MCF 10A (cell line): ENCODE measurements at regions of chr3 and their contacts with region 1.

Region 1: DNA sequence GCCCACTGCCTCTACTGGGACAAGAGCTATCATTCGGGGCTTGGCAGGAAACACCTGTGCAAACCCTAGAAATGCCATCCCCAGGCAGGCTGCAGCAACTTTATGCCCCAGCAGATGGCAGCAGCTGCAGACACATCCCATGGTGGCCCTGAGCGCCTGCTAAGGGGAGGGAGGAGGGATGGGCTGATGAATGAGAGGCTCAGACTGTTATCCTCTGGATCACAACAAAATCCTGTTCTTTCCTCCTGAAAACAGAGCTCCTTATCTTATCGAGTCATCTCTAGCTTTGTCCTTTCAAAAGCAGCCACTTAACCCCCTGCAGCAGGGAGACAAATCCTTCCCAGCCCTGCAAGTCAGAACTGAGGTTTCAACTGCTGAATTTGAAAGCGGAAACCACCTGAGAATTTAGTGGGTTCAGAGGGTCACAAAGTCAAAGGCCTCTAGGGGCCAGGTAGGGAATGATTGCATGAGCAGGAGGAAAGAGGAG is 90.6 kb upstream of the PROK2 start:
- DNase-seq: peak; percentile 79
- H3K4me3 Mint-ChIP-seq: no peak overlapping the region
- H3K27ac Mint-ChIP-seq: no peak overlapping the region
- H3K4me1 Mint-ChIP-seq: no peaks in the 10 kb centered on the region
- H3K27me3 Mint-ChIP-seq: peaks cover 4% of the 10 kb centered on the region
- CTCF ChIP-seq: peak; percentile 87

Region 2: GRCh38 chr3:71725279-71725991 is 150.1 kb before region 1 on chr3 and contains the start of gene EIF4E3:
- CTCF ChIA-PET with region 1: interaction called, 19 read pairs
- POLR2A ChIA-PET with region 1: no interaction called
- intact Hi-C with region 1: no loop called
- DNase-seq: peak; percentile 17
- H3K4me3 Mint-ChIP-seq: peak within 1 kb of the TSS; percentile 77
- H3K27ac Mint-ChIP-seq: peak within 1 kb of the TSS; percentile 5
- H3K4me1 Mint-ChIP-seq: no peaks in the 10 kb centered on the region
- H3K27me3 Mint-ChIP-seq: no peaks in the 10 kb centered on the region
- CTCF ChIP-seq: no peak
- total RNA-seq, gene EIF4E3: 4.3 and 7.6 TPM in 2 replicates

Region 3: DNA sequence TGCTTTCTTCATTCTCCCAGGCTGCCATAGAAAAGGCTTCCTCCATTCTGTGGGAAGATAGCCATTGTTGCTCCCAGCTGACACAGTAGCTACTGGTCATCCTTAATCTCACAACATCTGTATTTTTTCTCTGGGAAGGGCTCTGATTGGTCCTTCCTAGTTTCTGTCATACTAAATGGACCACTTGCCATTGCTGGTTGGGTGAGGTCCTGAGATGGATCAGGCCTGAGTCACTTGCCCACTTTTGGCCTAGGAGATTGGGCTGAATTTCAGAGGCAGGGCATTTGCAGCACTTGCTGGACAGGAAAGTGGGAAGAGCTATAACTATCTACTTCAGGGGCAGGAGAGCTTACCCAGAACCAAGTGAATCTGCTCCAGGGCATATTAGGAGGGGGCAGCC is 16.0 kb after region 1 on chr3:
- CTCF ChIA-PET with region 1: interaction called, 59 read pairs
- POLR2A ChIA-PET with region 1: interaction called, 6 read pairs
- intact Hi-C with region 1: no loop called
- DNase-seq: no peak
- H3K4me3 Mint-ChIP-seq: no peak overlapping the region
- H3K27ac Mint-ChIP-seq: no peak overlapping the region
- H3K4me1 Mint-ChIP-seq: peaks cover 7% of the 10 kb centered on the region
- H3K27me3 Mint-ChIP-seq: peaks cover 26% of the 10 kb centered on the region
- CTCF ChIP-seq: no peak

Region 4: GRCh38 chr3:71926262-71926600 is 50.7 kb after region 1 on chr3:
- CTCF ChIA-PET with region 1: interaction called, 18 read pairs
- POLR2A ChIA-PET with region 1: no interaction called
- intact Hi-C with region 1: no loop called
- DNase-seq: peak; percentile 68
- H3K4me3 Mint-ChIP-seq: no peak overlapping the region
- H3K27ac Mint-ChIP-seq: no peak overlapping the region
- H3K4me1 Mint-ChIP-seq: peaks cover 13% of the 10 kb centered on the region
- H3K27me3 Mint-ChIP-seq: peaks cover 10% of the 10 kb centered on the region
- CTCF ChIP-seq: peak; percentile 39

Region 5: GRCh38 chr3:71955240-71956068 is 80.0 kb after region 1 on chr3:
- CTCF ChIA-PET with region 1: interaction called, 18 read pairs
- POLR2A ChIA-PET with region 1: interaction called, 3 read pairs
- intact Hi-C with region 1: loop called (anchors 5 kb)
- DNase-seq: peak; percentile 78
- H3K4me3 Mint-ChIP-seq: no peak overlapping the region
- H3K27ac Mint-ChIP-seq: no peak overlapping the region
- H3K4me1 Mint-ChIP-seq: no peaks in the 10 kb centered on the region
- H3K27me3 Mint-ChIP-seq: peaks cover 22% of the 10 kb centered on the region
- CTCF ChIP-seq: peak; percentile 56

Region 6: DNA sequence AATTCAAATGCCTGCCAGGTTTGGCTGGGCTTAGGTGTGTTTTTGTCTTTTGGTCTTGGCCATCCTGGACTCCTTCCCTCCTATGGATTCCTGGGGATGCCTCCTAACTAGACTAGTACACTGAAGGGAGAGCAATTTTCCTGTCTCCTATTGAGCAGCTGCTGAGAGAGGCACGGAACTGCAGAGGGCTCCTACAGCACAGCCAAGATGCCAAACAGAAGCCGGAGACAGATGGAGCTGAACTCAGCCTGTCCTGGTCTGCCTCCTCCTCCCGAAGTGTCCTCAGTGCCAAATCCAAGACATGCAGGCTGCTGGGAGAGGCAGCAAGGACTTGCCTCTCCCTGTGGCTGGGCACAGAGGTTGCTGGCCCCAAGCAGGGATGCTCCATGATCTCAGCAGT is 166.0 kb after region 1 on chr3:
- CTCF ChIA-PET with region 1: no interaction called
- POLR2A ChIA-PET with region 1: no interaction called
- intact Hi-C with region 1: no loop called
- DNase-seq: no peak
- H3K4me3 Mint-ChIP-seq: no peak overlapping the region
- H3K27ac Mint-ChIP-seq: no peak overlapping the region
- H3K4me1 Mint-ChIP-seq: no peaks in the 10 kb centered on the region
- H3K27me3 Mint-ChIP-seq: peaks cover 50% of the 10 kb centered on the region
- CTCF ChIP-seq: no peak

Region 7: DNA sequence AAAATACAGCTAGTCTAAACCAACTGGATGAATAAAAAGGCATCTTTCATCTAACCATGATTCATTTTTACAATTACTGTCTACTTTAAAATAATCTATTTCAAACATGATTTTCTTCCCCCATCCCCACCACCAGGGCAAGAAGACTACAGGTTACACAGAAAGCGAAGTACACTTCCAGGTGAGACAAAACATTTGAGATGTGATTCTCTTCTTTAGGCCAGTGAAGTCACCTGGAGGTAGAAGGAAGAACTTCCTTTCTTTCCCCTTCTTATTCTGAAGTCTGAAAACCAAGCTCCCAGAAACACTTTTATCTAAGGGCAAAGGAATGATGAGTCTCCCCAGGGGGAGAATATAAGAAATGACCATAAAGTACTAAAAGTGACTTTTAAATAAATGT is 936.0 kb after region 1 on chr3:
- CTCF ChIA-PET with region 1: interaction called, 10 read pairs
- POLR2A ChIA-PET with region 1: interaction called, 5 read pairs
- intact Hi-C with region 1: no loop called
- DNase-seq: no peak
- H3K4me3 Mint-ChIP-seq: no peak overlapping the region
- H3K27ac Mint-ChIP-seq: no peak overlapping the region
- H3K4me1 Mint-ChIP-seq: no peaks in the 10 kb centered on the region
- H3K27me3 Mint-ChIP-seq: no peaks in the 10 kb centered on the region
- CTCF ChIP-seq: no peak